ENCODE measurements at regions of chrX and their contacts with region 1.

Region 1: DNA sequence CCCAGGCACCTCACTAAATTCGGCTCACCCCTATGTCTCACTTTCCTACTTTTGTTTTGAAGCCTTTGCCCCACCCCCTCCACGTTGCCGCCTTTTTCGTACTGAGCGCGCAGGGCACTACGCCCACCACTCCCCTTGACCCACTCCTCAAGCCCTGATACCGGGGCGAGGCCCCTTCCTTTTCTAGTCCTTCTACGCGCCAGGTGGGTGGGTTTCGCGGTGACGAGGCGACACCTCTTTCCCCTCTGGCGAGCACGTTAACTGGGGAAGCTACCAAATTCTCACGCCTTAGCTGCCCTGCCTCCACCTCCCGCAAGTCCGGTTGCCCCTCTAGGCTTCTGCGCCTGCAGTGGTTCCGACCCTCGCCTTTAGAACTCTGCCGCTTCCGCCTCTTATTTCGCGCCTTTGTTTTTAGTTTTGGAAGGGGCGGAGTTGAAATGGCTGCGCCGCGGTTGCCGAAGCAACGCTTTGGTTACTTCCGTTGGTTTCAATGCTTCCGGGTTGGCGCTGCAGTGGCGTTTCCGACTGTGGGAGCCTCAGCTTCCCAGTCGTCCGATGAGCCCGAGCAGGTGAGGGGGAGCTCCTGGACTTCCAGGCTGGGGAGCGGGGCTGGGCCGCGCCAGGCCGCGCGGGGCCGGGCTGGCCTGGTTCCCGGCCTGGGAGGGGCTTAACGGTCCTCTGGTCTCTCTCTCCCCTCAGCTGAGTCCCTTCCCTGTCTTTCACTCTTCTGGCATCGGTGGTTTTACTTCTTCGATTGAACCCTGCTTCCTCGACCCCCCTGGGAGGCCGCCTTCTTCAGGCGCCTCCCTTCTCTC is at the start of gene SLC25A14:
- DNase-seq: peak; percentile 52
- ATAC-seq: peak; percentile 89
- H3K4me3 Mint-ChIP-seq: peak within 1 kb of the TSS; percentile 93
- H3K27ac Mint-ChIP-seq: peak within 1 kb of the TSS; percentile 80
- H3K4me1 Mint-ChIP-seq: peaks cover 17% of the 10 kb centered on the region
- H3K27me3 Mint-ChIP-seq: no peaks in the 10 kb centered on the region
- CTCF ChIP-seq: no peak
- total RNA-seq, gene SLC25A14: 12.2 and 13.8 TPM in 2 replicates

Region 2: DNA sequence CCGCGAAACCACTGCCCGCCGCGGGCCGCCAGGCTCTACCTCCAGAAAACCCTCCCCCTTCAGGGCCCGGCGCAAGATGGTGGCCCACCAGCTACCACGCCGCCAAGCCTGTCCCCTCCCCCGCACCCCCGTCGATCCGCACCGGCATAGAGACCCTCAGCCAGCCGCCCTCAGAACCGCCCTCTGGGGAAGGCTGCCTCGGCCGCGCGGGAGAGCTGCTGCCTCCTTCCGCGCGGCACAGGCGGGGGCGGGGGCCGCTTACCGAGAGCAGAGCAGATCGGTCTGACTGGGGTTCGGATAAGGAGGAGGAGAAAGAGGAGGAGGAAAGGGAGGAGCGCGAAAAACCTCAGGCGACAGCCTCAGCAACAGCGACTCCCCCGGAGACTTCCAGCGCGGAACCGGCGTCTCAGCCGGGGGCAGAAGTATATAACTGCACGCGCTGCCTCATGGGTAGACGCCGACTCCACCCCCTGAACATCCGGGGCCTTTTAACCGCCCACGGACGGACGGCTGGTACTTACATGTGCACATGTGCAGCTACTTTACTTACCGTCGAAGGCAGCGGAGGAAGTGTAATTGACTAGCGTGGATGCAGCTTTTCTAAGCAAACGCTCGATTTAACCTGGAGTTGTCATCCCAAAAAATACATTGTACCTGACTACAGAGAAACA is 71.0 kb before region 1 on chrX and contains the start of gene ZNF280C:
- CTCF ChIA-PET with region 1: no interaction called
- POLR2A ChIA-PET with region 1: interaction called, 5 read pairs
- intact Hi-C with region 1: loop called (anchors 1 kb)
- DNase-seq: peak; percentile 80
- ATAC-seq: peak; percentile 93
- H3K4me3 Mint-ChIP-seq: peak within 1 kb of the TSS; percentile 86
- H3K27ac Mint-ChIP-seq: peak within 1 kb of the TSS; percentile 82
- H3K4me1 Mint-ChIP-seq: peaks cover 17% of the 10 kb centered on the region
- H3K27me3 Mint-ChIP-seq: no peaks in the 10 kb centered on the region
- CTCF ChIP-seq: no peak
- total RNA-seq, gene ZNF280C: 6.9 and 9.1 TPM in 2 replicates

Region 3: GRCh38 chrX:130401415-130402207 is 62.0 kb after region 1 on chrX and contains the start of gene RBMX2:
- CTCF ChIA-PET with region 1: no interaction called
- POLR2A ChIA-PET with region 1: interaction called, 3 read pairs
- intact Hi-C with region 1: loop called (anchors 1 kb)
- DNase-seq: peak; percentile 60
- ATAC-seq: peak; percentile 87
- H3K4me3 Mint-ChIP-seq: peak within 1 kb of the TSS; percentile 86
- H3K27ac Mint-ChIP-seq: peak within 1 kb of the TSS; percentile 91
- H3K4me1 Mint-ChIP-seq: peaks cover 19% of the 10 kb centered on the region
- H3K27me3 Mint-ChIP-seq: peaks cover 7% of the 10 kb centered on the region
- CTCF ChIP-seq: no peak
- total RNA-seq, gene RBMX2: 21.1 and 23.6 TPM in 2 replicates